ENCODE measurements at regions of chr9 and their contacts with region 1.

Region 1: GRCh38 chr9:84668196-84669012 is 1.1 kb upstream of the NTRK2 start:
- DNase-seq: peak; percentile 51 to 69
- ATAC-seq: peak; percentile 83 to 94 (median 90)
- H3K4me3 ChIP-seq: peak overlapping the region; percentile 29 to 62 (median 56)
- H3K27ac ChIP-seq: peak overlapping the region in 3 of 10 donors; percentile 9 to 30 (median 23)
- H3K4me1 ChIP-seq: peaks cover 5 to 34% (median 26%) of the 10 kb centered on the region in 9 donors
- H3K27me3 ChIP-seq: peaks cover 3 to 63% (median 29%) of the 10 kb centered on the region in 7 donors
- CTCF ChIP-seq: peak; percentile 38 to 76 (median 60)

Region 2: GRCh38 chr9:84343111-84343521 is 325.3 kb before region 1 on chr9:
- intact Hi-C with region 1: no loop called
- DNase-seq: no peak
- ATAC-seq: peak; percentile 46 to 88 (median 75)
- H3K4me3 ChIP-seq: no peak overlapping the region
- H3K27ac ChIP-seq: peak overlapping the region in 9 of 10 donors; percentile 27 to 85 (median 74)
- H3K4me1 ChIP-seq: peaks cover 0 to 27% (median 0%) of the 10 kb centered on the region in 9 donors
- H3K27me3 ChIP-seq: no peaks in the 10 kb centered on the region
- CTCF ChIP-seq: no peak

Region 3: GRCh38 chr9:84379740-84380139 is 288.7 kb before region 1 on chr9:
- intact Hi-C with region 1: no loop called
- DNase-seq: no peak
- ATAC-seq: no peak
- H3K4me3 ChIP-seq: no peak overlapping the region
- H3K27ac ChIP-seq: no peak overlapping the region
- H3K4me1 ChIP-seq: peaks cover 0 to 27% (median 8%) of the 10 kb centered on the region in 9 donors
- H3K27me3 ChIP-seq: no peaks in the 10 kb centered on the region
- CTCF ChIP-seq: no peak

Region 4: GRCh38 chr9:84397151-84397728 is 271.2 kb before region 1 on chr9:
- intact Hi-C with region 1: loop called in 3 of 10 experiments (anchors 10 kb)
- DNase-seq: peak; percentile 31 to 53
- ATAC-seq: peak; percentile 71 to 85 (median 76)
- H3K4me3 ChIP-seq: no peak overlapping the region
- H3K27ac ChIP-seq: no peak overlapping the region
- H3K4me1 ChIP-seq: peaks cover 0 to 8% (median 0%) of the 10 kb centered on the region in 9 donors
- H3K27me3 ChIP-seq: peaks cover 0 to 32% (median 10%) of the 10 kb centered on the region in 7 donors
- CTCF ChIP-seq: peak; percentile 82 to 98 (median 96)

Region 5: DNA sequence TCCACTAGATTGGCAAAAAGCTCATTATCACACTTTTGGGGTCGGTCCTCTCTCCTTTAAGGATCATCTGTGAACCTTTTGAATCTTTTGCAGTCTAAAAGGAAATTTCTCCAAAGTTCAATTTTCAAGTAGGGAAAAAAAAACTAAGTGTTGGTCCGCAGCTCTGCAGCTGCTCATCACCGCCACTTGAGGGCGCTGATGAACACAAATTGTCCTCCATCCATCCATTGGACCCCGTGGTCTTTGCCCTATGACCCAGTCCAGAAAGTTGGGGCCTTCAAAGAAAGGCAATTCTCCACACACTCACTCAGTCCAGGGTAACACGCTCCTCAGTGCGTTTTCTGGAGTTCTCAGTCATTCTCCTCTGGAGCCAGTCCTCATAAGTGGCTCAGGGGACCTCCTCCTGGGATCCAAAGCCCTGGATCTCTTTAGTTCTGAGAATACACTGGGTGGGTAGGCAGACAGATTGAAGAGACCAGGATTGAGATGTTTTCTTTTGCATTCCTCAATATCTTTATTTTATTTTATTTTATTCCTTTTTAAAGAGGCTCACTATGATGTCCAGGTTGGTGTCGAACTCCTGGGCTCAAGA is 264.2 kb before region 1 on chr9:
- intact Hi-C with region 1: loop called in 3 of 10 experiments (anchors 10 kb)
- DNase-seq: no peak
- ATAC-seq: no peak
- H3K4me3 ChIP-seq: no peak overlapping the region
- H3K27ac ChIP-seq: no peak overlapping the region
- H3K4me1 ChIP-seq: no peaks in the 10 kb centered on the region
- H3K27me3 ChIP-seq: peaks cover 0 to 4% (median 0%) of the 10 kb centered on the region in 7 donors
- CTCF ChIP-seq: peak; percentile 33 to 69 (median 58)

Region 6: DNA sequence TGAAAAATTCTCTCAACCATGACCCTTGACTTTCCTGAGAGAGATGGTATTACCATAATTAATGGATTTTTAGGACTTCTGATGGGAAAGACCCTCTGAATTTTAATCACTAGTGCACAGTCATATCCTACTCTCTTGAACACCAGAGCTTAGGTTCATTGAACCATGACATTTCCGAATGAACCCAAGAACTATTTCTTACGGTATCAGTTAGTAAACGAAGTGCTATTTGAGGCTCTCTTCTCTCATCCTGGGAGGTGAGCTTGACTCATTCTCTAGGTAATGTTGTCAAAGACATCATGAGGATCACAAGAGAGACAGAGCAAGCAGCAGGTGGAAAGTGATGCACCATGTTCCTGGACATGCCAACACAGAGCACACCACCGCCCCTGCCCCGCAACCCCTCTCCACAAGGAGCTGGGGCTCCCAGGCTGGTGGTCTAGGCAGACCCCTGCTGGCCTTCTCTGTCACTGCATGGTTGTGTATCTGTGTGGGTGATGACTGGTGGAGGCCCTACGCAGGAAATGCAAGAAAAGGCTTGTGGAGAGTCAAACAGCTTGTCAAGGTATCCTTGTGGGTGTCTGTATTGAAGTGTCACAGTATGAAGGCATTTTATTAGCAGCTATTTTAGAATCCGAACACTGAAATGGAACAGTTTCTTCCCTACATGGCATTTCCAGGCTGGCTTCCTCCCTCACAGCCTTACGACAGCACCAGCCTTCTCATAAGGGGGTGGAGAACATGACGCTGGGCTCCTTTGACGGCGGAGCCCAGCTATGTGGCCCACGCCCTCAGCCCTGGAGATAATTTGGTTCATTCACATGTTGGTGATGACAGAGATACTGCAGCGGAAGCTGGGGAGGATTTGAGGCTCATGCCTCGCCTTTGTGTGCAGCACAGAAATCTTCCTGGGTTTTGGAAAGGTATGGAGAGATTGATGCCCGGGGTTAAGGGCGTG is 298.8 kb after region 1 on chr9:
- intact Hi-C with region 1: no loop called
- DNase-seq: no peak
- ATAC-seq: no peak
- H3K4me3 ChIP-seq: no peak overlapping the region
- H3K27ac ChIP-seq: no peak overlapping the region
- H3K4me1 ChIP-seq: no peaks in the 10 kb centered on the region
- H3K27me3 ChIP-seq: peaks cover 0 to 17% (median 6%) of the 10 kb centered on the region in 7 donors
- CTCF ChIP-seq: no peak

Region 7: GRCh38 chr9:85030316-85030715 is 361.9 kb after region 1 on chr9:
- intact Hi-C with region 1: no loop called
- DNase-seq: no peak
- ATAC-seq: no peak
- H3K4me3 ChIP-seq: no peak overlapping the region
- H3K27ac ChIP-seq: no peak overlapping the region
- H3K4me1 ChIP-seq: no peaks in the 10 kb centered on the region
- H3K27me3 ChIP-seq: peaks cover 0 to 6% (median 0%) of the 10 kb centered on the region in 7 donors
- CTCF ChIP-seq: no peak

Measured in heart right ventricle (tissue), 16 donors.